ENCODE measurements at regions of chr2 and their contacts with region 1.

Region 1: GRCh38 chr2:164717000-164717803 is 95.9 kb upstream of the GRB14 start:
- DNase-seq: no peak
- ATAC-seq: no peak
- H3K4me3 Mint-ChIP-seq: no peak overlapping the region
- H3K27ac Mint-ChIP-seq: no peak overlapping the region
- H3K4me1 Mint-ChIP-seq: no peaks in the 10 kb centered on the region
- H3K27me3 Mint-ChIP-seq: no peaks in the 10 kb centered on the region

Region 2: GRCh38 chr2:163155279-163155883 is 1561.8 kb before region 1 on chr2:
- CTCF ChIA-PET with region 1: no interaction called
- POLR2A ChIA-PET with region 1: no interaction called
- intact Hi-C with region 1: loop called in 1 of 2 experiments (anchors 10 kb)
- DNase-seq: peak; percentile 3
- ATAC-seq: no peak
- H3K4me3 Mint-ChIP-seq: no peak overlapping the region
- H3K27ac Mint-ChIP-seq: no peak overlapping the region
- H3K4me1 Mint-ChIP-seq: no peaks in the 10 kb centered on the region
- H3K27me3 Mint-ChIP-seq: peaks cover 2% of the 10 kb centered on the region

Region 3: GRCh38 chr2:163182764-163183354 is 1534.3 kb before region 1 on chr2:
- CTCF ChIA-PET with region 1: no interaction called
- POLR2A ChIA-PET with region 1: no interaction called
- intact Hi-C with region 1: loop called in 1 of 2 experiments (anchors 5 kb)
- DNase-seq: no peak
- ATAC-seq: no peak
- H3K4me3 Mint-ChIP-seq: no peak overlapping the region
- H3K27ac Mint-ChIP-seq: no peak overlapping the region
- H3K4me1 Mint-ChIP-seq: no peaks in the 10 kb centered on the region
- H3K27me3 Mint-ChIP-seq: no peaks in the 10 kb centered on the region

Region 4: GRCh38 chr2:164560181-164560792 is 156.9 kb before region 1 on chr2:
- CTCF ChIA-PET with region 1: interaction called, 10 read pairs
- POLR2A ChIA-PET with region 1: no interaction called
- intact Hi-C with region 1: loop called (anchors 1 kb)
- DNase-seq: no peak
- ATAC-seq: no peak
- H3K4me3 Mint-ChIP-seq: no peak overlapping the region
- H3K27ac Mint-ChIP-seq: no peak overlapping the region
- H3K4me1 Mint-ChIP-seq: no peaks in the 10 kb centered on the region
- H3K27me3 Mint-ChIP-seq: no peaks in the 10 kb centered on the region

Measured in activated CD4-positive, alpha-beta T cell treated with anti-CD3 and anti-CD28 coated beads for 36 hours (primary cell).